ENCODE measurements at regions of chr1 and their contacts with region 1.

Region 1: DNA sequence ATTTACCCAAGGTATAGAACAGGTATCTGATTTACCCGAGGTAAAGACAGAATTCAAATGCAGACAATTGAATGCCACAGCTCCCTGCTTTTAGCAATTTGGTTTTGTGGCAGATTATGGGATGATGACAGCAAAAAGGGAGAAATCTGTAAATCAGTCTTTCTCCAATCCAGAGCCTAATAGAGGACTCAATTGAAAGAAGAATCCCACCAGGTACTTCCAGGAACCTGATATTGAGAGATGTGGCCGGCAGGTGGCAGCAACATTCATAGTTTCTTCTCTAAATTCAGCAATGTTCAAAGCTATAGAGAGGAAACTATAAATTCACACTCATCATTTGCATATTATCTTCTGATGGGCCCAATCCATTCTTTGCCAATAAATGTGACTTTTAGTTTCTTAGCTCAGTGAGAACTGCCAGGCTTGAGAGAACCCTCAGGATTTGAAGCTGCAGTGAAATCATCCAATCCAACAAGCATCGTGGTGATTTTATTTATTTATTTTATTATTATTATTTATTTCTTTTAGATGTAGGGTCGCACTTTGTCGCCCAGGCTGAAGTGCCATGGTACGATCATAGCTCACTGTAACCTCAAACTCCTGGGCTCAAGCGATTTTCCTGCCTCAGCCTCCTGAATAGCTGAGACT is 9.8 kb upstream of the PHACTR4 start:
- DNase-seq: no peak
- H3K4me3 ChIP-seq: no peak overlapping the region
- CTCF ChIP-seq: peak; percentile 57

Region 2: DNA sequence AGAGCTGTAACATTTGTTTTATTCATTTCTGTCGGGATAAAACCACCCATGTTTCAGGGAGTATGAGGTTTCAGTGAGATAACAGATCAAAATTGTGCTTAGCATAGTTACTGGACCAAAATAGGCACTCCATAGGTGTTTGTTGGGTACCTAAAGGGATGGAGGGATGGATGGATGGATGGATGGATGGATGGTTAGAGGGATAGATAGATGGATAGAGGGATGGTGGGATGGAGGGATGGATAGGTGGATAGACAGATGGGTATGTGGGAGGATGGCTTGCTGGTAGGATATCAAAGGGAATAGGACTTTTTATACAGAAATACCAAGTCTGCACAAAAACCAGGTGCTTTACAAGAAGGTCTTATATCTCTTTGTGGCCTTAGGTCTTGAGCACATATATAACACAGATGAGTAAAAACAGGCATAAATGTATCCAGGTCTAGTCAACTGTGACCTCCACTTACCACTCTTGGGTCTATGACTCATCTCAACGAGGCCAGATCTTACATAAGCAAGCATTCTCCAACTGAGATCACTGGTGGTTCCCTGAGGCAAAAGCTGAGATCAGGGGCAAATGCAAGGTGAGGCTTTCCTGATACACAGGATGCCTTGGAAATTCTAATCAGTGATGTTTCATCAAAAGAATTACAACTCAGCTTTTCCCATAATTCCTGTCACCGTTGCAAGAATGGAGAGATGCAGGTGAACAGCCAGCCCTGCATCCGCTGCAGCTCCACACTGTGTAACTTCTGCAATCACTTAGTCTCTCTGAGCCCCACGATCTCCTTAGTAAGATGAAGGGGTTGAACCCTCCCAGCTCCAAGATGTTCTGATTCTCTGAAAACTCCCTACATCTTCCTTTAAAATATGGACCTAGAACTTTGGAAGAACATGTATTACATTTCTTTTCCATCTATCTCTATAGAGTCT is 215.2 kb before region 1 on chr1:
- CTCF ChIA-PET with region 1: no interaction called
- POLR2A ChIA-PET with region 1: no interaction called
- DNase-seq: no peak
- H3K4me3 ChIP-seq: no peak overlapping the region
- CTCF ChIP-seq: no peak

Region 3: DNA sequence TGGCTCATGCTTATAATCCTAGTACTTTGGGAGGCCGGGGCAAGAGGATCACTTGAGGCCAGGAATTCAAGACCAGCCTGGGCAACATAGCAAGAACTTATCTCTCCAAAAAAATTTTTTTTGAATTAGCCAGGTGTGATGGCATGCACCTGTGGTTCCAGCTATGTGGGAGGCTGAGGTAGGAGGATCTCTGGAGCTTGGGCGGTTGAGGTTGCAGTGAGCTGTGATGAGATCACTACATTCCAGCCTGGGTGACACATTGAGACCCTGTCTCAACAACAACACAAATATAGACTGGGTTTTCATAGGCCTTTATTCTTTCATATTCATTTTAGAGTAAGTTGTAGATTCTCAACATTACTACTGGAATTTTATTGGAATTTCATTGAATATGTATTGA is 18.1 kb before region 1 on chr1:
- CTCF ChIA-PET with region 1: interaction called, 31 read pairs
- POLR2A ChIA-PET with region 1: no interaction called
- DNase-seq: no peak
- H3K4me3 ChIP-seq: no peak overlapping the region
- CTCF ChIP-seq: no peak

Region 4: DNA sequence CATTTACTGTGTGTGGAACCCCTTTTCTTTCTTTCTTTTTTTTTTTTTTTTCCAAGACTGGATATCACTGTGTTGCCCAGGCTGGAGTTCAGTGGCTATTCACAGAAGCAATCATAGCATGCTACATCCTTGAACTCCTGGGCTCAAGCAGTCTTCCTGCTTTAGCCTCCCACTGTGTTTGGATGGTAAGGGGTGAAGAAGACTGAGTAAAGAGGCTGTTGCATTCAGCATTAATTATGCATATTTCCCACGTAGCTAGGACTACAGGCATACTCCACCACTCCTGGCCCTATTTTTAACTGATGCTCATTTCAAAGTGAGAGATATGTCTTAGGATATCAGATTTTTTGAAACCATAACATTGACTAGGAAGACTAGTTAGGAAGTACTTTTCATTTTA is 49.4 kb after region 1 on chr1:
- CTCF ChIA-PET with region 1: interaction called, 10 read pairs
- POLR2A ChIA-PET with region 1: no interaction called
- DNase-seq: no peak
- H3K4me3 ChIP-seq: no peak overlapping the region
- CTCF ChIP-seq: no peak

Region 5: DNA sequence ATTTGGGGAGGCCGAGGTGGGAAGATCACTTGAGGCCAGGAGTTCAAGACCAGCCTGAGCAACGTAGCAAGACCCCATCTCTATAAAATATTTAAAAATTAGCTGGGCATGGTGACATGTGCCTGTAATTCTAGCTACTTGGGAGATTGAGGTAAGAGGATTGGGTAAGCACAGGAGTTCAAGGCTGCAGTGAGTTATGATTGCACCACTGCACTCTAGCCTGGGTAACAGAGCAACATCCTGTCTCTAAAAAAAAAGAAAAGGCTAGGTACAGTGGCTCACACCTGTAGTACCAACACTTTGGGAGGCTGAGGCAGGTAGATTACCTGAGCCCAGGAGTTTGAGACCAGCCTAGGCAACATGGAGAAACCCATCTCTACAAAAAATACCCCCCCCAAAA is 110.4 kb after region 1 on chr1:
- CTCF ChIA-PET with region 1: interaction called, 20 read pairs
- POLR2A ChIA-PET with region 1: no interaction called
- DNase-seq: no peak
- H3K4me3 ChIP-seq: no peak overlapping the region
- CTCF ChIP-seq: no peak